ENCODE measurements at regions of chr22 and their contacts with region 1.

Region 1: GRCh38 chr22:35677460-35678187 is 29.4 kb downstream of the APOL6 start:
- DNase-seq: no peak
- H3K4me3 ChIP-seq: no peak overlapping the region
- H3K27ac ChIP-seq: no peak overlapping the region
- H3K4me1 ChIP-seq: peaks cover 6% of the 10 kb centered on the region
- H3K27me3 ChIP-seq: no peaks in the 10 kb centered on the region
- CTCF ChIP-seq: no peak

Region 2: DNA sequence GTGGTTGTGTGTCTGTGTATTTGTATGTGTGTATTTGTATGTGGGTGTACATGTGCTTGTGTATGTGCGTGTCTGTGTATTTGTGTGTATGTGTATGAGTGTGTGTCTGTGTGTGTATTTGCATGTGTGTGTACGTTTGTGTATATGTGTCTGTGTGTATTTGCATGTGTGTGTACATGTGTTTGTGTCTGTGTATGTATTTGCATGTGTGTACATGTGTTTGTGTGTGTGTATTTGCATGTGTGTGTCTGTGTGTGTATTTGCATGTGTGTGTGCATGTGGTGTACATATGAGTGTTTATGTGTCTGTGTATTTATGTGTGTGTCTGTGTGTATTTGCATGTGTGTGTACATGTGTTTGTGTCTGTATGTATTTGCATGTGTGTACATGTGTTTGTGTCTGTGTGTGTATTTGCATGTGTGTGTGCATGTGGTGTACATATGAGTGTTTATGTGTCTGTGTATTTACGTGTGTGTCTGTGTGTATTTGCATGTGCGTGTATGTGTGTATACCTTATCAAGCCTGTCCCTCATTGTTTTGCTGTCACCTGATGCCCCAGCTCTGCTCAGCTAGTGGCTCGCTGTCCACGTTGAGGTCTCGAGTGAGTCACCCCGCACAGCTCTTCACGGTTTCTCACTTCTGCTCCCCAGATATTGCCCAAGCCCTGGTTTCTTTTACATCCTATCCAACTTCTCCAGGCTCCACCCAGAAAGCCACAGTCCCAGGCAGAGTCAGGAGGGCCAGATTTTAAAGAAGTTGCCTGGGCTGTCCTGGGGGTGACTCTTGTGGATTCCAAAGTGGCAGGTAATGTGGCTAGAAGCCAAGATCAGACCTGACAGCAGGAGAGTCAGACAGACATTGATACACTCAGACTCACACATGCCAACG is 75.6 kb before region 1 on chr22:
- CTCF ChIA-PET with region 1: no interaction called
- dilution Hi-C with region 1: no loop called
- in situ Hi-C with region 1: no loop called
- intact Hi-C with region 1: no loop called
- DNase-seq: peak; percentile 95
- H3K4me3 ChIP-seq: no peak overlapping the region
- H3K27ac ChIP-seq: no peak overlapping the region
- H3K4me1 ChIP-seq: peaks cover 17% of the 10 kb centered on the region
- H3K27me3 ChIP-seq: no peaks in the 10 kb centered on the region
- CTCF ChIP-seq: no peak

Region 3: DNA sequence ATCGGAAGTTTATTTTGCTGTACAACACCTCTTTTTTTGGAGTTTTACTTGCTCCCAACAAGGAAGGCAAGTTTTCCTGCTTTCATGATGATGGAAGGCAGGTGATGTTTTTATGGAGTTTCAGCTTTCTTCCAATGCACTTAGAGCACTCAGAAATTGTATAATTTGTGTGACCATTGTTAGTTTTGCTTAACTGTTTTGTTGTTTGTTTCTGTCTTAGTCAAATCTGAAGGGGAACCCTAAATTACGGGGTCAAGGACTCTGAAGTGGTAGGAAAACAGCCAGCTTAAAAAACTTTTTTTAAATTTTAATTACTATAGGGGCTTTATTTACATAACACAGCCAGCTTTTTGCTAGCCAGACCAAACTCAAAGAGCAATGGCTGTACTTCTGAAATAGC is 14.7 kb before region 1 on chr22:
- CTCF ChIA-PET with region 1: interaction called, 11 read pairs
- dilution Hi-C with region 1: no loop called
- in situ Hi-C with region 1: no loop called
- intact Hi-C with region 1: no loop called
- DNase-seq: no peak
- H3K4me3 ChIP-seq: peak overlapping the region in 1 of 3 experiments; percentile 38
- H3K27ac ChIP-seq: no peak overlapping the region
- H3K4me1 ChIP-seq: peaks cover 2% of the 10 kb centered on the region
- H3K27me3 ChIP-seq: no peaks in the 10 kb centered on the region
- CTCF ChIP-seq: no peak

Measured in mammary epithelial cell (primary cell).